Psoas muscle (tissue), 8 donors: ENCODE measurements at regions of chr3 and their contacts with region 1.

Region 1: DNA sequence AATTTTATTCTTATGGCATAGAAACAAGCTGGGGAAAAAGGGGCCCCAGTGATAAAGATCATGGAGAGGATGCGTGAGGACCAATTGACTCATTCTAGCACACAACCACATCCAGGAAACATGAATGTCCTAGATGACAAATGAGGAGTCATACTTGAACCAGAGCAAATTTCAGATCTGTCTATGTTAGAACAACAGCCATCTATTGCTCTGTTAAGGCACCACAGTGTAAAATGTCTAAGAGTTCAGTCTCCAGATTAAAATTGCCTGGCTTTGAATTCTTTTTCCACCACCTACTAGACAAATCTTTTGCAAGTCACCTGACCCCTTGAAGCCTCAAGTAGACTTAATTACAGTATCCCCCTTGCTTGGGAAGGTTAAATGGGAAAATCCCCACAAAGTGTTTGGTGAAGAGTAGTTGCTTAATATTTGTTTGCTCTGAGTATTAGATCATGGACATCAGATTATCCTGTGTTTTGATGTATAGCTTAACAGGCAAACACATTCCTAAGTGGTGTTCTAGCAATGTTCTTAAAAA is 258.7 kb upstream of the TGFBR2 start:
- DNase-seq: no peak
- ATAC-seq: no peak
- H3K4me3 ChIP-seq: no peak overlapping the region
- H3K27ac ChIP-seq: no peak overlapping the region
- H3K4me1 ChIP-seq: peaks cover 15% of the 10 kb centered on the region
- H3K27me3 ChIP-seq: no peaks in the 10 kb centered on the region
- CTCF ChIP-seq: no peak

Region 2: GRCh38 chr3:30199096-30199759 is 148.5 kb before region 1 on chr3:
- intact Hi-C with region 1: no loop called
- DNase-seq: peak; percentile 68 to 81
- ATAC-seq: peak; percentile 54 to 78 (median 60)
- H3K4me3 ChIP-seq: no peak overlapping the region
- H3K27ac ChIP-seq: no peak overlapping the region
- H3K4me1 ChIP-seq: no peaks in the 10 kb centered on the region
- H3K27me3 ChIP-seq: no peaks in the 10 kb centered on the region
- CTCF ChIP-seq: peak; percentile 89

Region 3: GRCh38 chr3:30511524-30512278 is 164.0 kb after region 1 on chr3:
- intact Hi-C with region 1: loop called in 1 of 2 experiments (anchors 10 kb)
- DNase-seq: peak in 1 of 2 donors; percentile 20
- ATAC-seq: peak; percentile 79 to 93 (median 84)
- H3K4me3 ChIP-seq: no peak overlapping the region
- H3K27ac ChIP-seq: peak overlapping the region; percentile 60
- H3K4me1 ChIP-seq: no peaks in the 10 kb centered on the region
- H3K27me3 ChIP-seq: no peaks in the 10 kb centered on the region
- CTCF ChIP-seq: no peak